H1 (cell line): ENCODE measurements at regions of chr22 and their contacts with region 1.

Region 1: DNA sequence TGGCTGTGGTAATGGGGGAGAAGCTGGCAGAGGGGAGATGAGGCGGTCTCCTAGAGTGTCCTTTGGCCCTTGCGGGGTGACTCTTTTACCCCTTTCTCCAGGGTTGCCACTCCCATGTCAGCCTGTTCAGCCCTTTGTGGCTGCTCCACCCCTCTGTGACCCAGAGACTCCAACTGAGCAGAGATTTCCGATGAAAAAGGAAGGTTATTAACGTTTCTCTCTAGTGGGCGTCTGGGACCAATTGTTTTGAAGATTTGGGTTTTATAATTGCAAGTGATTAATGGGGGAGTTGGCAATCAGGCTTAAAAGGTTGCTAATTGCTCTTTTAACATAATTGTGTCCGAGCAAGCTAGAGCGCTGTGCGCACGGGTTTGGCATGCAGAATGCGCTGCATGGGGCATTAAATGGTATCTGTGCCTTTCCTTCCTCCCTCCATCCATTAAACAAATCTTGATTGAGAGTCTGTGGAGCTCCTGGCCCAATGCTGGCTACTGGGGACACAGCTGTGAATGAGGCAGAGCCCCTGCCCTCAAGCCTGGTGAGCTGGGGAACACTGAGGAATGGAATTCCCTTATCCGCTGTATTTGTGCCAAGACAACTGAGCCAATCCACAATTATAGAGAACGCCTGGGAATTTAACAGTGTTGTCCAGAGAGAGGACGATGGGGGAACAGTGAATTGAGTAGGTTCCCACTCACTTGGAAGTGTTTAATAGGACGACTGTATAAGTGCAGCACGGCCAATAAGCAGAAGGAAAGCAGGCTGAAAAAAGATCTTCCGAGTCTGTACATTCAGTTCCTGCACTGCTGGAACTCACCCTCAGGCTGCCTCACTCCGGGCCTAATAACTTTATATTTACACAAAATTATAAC is 295.9 kb downstream of the MIAT start:
- DNase-seq: peak; percentile 51 to 71
- H3K4me3 ChIP-seq: peak overlapping the region in 2 of 4 experiments; percentile 27 to 49; a peak in 5 of 8 replicates
- H3K27ac ChIP-seq: no peak overlapping the region
- H3K4me1 ChIP-seq: peaks cover 8 to 34% (median 18%) of the 10 kb centered on the region in 4 experiments
- H3K27me3 ChIP-seq: peaks cover 0 to 10% (median 3%) of the 10 kb centered on the region in 4 experiments; a peak in 4 of 7 replicates
- CTCF ChIP-seq: no peak
- EP300 ChIP-seq: no peak
- POLR2A ChIP-seq: no peak
- RAD21 ChIP-seq: no peak

Region 2: DNA sequence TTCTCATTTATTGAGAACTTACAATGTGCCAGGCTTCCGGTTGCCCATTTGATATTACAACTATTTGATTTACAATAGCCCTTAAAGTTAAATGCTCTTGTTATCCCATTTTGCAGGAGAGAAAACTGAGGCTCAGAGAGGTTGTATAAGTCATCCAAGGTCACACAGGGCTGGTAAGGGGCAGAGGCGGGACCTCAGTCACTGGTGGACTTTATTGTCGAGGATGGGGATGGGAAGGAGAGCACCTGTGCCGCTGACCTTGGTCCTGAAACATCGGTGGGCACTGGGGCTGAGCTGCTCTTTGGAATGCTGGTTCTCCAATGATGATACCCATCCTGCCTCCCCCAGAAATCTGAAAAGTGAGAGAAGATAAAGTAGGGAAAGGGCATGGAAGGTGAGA is 30.4 kb before region 1 on chr22:
- CTCF ChIA-PET with region 1: no interaction called
- POLR2A ChIA-PET with region 1: no interaction called
- DNase-seq: peak in 1 of 2 experiments; percentile 86
- H3K4me3 ChIP-seq: no peak overlapping the region
- H3K27ac ChIP-seq: no peak overlapping the region
- H3K4me1 ChIP-seq: peaks cover 0 to 11% (median 4%) of the 10 kb centered on the region in 4 experiments; a peak in 4 of 7 replicates
- H3K27me3 ChIP-seq: peaks cover 0 to 2% (median 0%) of the 10 kb centered on the region in 4 experiments; a peak in 2 of 7 replicates
- CTCF ChIP-seq: no peak
- EP300 ChIP-seq: no peak
- POLR2A ChIP-seq: no peak
- RAD21 ChIP-seq: 0 out of 4 replicates have a peak, but pooled peaks of 1 of the 2 experiments have one; percentile 2

Region 3: DNA sequence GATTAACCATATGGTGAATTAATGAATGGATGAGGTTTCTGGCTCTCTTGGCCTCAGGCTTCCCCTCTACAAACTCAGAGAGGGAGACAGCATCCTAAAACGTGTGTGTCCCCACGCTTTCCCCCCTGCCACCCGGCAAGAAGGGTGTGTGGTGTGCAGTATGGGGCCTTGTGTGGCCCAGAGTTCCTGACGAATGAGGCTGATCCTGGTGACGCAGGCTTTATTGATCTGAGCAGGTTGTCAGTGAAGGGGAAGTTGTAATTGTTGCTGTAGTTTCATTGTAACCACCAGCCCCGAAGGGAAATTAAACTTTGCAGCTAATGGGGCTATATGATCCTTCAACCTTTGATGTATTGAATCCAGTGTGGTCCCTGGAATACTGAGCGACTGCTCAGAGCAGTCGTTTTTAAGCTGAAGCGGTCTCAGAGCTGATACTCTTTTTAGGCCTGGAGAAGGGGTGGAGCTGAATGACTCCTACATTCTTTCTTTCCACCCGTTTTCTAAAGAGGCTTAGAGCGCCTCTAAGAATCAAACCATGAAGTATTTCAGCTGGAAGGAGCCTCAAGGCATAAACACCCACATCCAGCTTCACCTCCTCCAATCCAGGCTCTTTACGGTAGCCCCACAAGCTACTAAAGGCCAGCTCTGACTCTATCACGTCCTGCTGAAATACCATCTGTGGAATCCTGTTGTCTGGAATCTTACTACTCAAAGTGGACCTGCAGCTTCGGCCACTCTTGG is 11.2 kb before region 1 on chr22:
- CTCF ChIA-PET with region 1: interaction called, 10 read pairs
- POLR2A ChIA-PET with region 1: interaction called, 3 read pairs
- DNase-seq: no peak
- H3K4me3 ChIP-seq: no peak overlapping the region
- H3K27ac ChIP-seq: no peak overlapping the region
- H3K4me1 ChIP-seq: peaks cover 0 to 6% (median 2%) of the 10 kb centered on the region in 4 experiments; a peak in 3 of 7 replicates
- H3K27me3 ChIP-seq: no peaks in the 10 kb centered on the region
- CTCF ChIP-seq: no peak
- EP300 ChIP-seq: no peak
- POLR2A ChIP-seq: no peak
- RAD21 ChIP-seq: no peak